HEK293 (cell line): ENCODE measurements at regions of chr21 and their contacts with region 1.

Region 1: DNA sequence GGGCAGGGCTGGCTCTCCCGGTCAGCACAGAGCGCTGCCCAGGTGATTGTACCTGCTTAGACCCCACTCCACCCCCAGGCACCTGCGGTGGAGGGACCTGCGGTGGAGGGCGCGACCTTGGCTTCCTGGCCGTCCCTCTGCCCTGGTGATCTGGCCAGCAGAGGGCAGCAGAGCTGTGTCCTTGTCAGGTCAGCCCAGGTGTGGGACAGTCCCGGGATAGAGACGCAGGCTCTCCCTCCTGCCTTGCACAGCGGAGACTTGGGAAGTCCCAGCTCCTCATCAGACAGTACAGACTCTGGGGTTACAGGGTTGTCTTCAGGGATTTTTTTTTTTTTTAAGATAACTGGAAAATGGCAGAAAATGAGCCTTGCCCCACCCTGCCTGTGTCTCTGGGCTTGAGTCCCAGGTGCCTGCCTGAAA is 10.0 kb downstream of the SLX9 start:
- H3K4me3 ChIP-seq: no peak overlapping the region
- H3K27ac ChIP-seq: no peak overlapping the region
- H3K4me1 ChIP-seq: no peaks in the 10 kb centered on the region
- CTCF ChIP-seq: peak; percentile 94

Region 2: DNA sequence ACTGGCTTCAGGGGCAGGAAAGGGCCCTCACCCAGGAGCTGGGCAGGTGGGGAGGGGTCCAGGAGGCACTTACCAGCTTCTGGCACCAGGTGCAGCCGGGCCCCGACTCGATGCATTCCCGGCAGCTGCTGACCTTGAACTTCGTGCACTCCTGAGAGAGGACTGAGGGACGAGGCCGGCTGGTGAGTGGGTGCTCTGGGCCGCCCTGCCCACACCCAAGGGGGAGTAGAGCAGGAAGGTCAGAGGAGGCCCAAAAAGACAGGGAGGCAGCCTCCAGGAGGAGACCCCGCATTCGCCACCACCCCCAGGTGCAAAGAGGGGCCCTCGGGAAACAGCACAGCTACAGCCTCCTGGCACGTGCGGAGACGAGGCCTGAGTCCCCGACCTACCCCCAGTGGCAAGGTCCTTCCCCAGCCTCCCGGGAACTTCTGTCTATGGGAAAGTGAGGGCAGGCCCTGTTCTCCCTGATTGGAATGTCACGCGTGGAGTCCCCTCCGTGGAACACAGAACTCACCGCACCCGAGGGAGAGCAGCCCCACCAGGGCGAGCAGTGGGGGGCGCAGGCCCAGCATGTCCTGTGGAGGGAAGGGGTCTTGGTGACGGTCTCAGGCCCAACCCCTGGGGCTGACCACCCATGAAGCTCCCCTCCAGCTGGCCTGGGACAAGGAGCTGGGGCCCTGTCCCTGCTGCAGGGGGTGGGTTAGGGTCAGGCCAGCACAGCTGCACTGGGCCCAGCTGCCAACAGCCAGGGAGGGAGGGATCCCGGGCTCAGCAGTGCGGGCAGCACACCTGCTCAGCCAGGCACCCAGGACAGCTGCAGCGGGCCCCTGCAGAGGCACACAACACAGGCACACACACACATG is 39.3 kb before region 1 on chr21:
- CTCF ChIA-PET with region 1: no interaction called
- POLR2A ChIA-PET with region 1: no interaction called
- H3K4me3 ChIP-seq: no peak overlapping the region
- H3K27ac ChIP-seq: no peak overlapping the region
- H3K4me1 ChIP-seq: no peaks in the 10 kb centered on the region
- CTCF ChIP-seq: no peak

Region 3: DNA sequence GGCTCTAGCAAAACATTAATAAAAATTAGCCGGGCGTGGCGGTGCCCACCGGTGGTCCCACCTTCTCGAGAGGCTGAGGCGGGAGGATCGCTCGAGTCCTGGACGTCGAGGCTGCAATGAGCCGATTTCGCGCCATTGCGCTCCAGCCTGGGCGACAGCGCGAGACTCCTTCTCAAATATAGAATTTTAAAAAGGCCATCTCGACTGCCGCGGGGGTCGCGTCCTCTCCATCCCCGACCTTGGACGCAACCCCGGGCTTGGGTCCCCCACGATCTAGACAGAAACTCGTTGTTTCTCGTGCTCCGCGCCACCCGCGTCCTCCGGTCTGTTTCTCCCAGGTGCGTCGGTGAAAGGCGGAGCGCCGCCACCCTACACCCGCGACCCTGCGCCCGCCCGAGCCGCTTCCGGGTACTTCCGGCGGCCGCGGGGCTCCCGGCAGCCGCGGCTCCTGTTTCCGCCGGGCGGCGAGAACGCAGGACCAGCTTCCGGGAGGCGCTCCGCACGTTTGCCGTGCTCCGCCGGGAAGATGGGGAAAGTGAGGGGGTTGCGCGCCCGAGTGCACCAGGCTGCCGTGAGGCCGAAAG is 10.2 kb before region 1 on chr21 and contains the start of gene SLX9:
- CTCF ChIA-PET with region 1: interaction called, 12 read pairs
- POLR2A ChIA-PET with region 1: interaction called, 4 read pairs
- H3K4me3 ChIP-seq: peak within 1 kb of the TSS; percentile 87
- H3K27ac ChIP-seq: peak within 1 kb of the TSS; percentile 69
- H3K4me1 ChIP-seq: peaks cover 11% of the 10 kb centered on the region; the same call in 1 of the 2 replicates
- CTCF ChIP-seq: peak; percentile 59; the same call in 1 of the 2 replicates

Region 4: DNA sequence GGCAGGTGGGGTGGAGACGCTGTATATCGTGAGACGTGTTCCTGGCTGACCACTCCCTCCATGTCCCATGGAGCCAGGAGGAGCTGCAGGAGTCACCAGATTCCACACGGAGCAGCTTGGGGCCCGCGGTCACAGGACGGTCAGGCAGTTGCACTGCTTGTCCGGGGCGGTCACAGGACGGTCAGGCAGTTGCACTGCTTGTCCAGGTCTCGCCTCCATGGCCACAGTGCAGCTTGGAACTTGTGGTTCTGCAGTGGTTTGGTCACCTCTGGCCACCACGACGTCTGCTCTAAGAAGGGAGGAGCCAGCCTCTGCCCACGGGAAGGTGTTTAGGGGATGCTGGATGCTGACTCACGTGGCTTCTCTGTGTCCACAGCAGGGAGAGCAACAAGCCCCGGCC is 23.0 kb after region 1 on chr21:
- CTCF ChIA-PET with region 1: interaction called, 11 read pairs
- POLR2A ChIA-PET with region 1: interaction called, 5 read pairs
- H3K4me3 ChIP-seq: no peak overlapping the region
- H3K27ac ChIP-seq: no peak overlapping the region
- H3K4me1 ChIP-seq: no peaks in the 10 kb centered on the region
- CTCF ChIP-seq: no peak

Region 5: GRCh38 chr21:45074048-45074817 is 124.4 kb after region 1 on chr21 and contains the start of gene ADARB1:
- CTCF ChIA-PET with region 1: interaction called, 20 read pairs
- POLR2A ChIA-PET with region 1: no interaction called
- H3K4me3 ChIP-seq: peak within 1 kb of the TSS; percentile 71
- H3K27ac ChIP-seq: peak within 1 kb of the TSS; percentile 87
- H3K4me1 ChIP-seq: peaks cover 3% of the 10 kb centered on the region; the same call in 1 of the 2 replicates
- CTCF ChIP-seq: no peak